Pancreas (tissue), 10 donors: ENCODE measurements at regions of chr15 and their contacts with region 1.

Region 1: GRCh38 chr15:69474848-69475455 is 22.3 kb downstream of the RPLP1 start:
- DNase-seq: no peak
- ATAC-seq: no peak
- H3K4me3 ChIP-seq: no peak overlapping the region
- H3K27ac ChIP-seq: no peak overlapping the region
- H3K4me1 ChIP-seq: no peaks in the 10 kb centered on the region
- H3K27me3 ChIP-seq: no peaks in the 10 kb centered on the region
- CTCF ChIP-seq: no peak

Region 2: GRCh38 chr15:68991723-68992122 is 483.2 kb before region 1 on chr15:
- intact Hi-C with region 1: no loop called
- DNase-seq: peak in 2 of 6 donors; percentile 14 to 49
- ATAC-seq: peak; percentile 34 to 82 (median 68)
- H3K4me3 ChIP-seq: no peak overlapping the region
- H3K27ac ChIP-seq: no peak overlapping the region
- H3K4me1 ChIP-seq: no peaks in the 10 kb centered on the region
- H3K27me3 ChIP-seq: no peaks in the 10 kb centered on the region
- CTCF ChIP-seq: no peak

Region 3: GRCh38 chr15:69951907-69952555 is 477.1 kb after region 1 on chr15:
- intact Hi-C with region 1: no loop called
- DNase-seq: no peak
- ATAC-seq: no peak
- H3K4me3 ChIP-seq: no peak overlapping the region
- H3K27ac ChIP-seq: no peak overlapping the region
- H3K4me1 ChIP-seq: no peaks in the 10 kb centered on the region
- H3K27me3 ChIP-seq: no peaks in the 10 kb centered on the region
- CTCF ChIP-seq: no peak

Region 4: DNA sequence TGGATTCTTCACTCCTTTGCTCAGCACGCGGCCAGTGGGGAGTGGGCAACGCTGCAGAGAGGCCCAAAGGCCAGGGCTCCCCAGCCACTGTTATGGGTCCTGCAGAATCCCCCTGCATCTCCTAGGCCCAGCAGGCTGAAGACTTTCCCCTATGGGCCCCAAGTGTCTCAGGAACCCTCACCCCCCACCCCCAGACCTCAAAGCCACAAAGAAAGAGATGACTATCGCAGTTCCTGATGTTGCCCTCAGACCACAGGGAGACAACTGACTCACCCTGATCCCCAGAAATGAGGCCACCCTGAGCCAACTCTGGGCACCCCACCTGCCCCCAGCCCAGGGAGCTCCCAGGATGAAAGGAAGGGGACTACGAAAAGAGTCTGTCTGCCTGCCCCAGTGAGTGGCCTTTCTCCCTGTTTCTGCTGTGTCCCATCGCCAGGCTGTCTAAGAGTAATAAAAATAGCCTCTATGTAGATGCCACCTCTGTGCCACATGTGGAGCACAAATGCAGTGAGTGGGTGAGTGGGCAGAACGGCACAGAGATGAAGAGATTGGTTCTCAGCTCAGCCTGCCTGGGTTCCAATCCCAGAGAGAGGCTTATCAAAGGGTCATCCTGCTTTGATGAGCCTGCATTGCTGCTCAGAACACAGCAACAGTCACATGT is 1005.4 kb after region 1 on chr15:
- intact Hi-C with region 1: loop called in 1 of 3 experiments (anchors 5 kb)
- DNase-seq: peak in 1 of 6 donors; percentile 21
- ATAC-seq: peak in 1 of 4 donors; percentile 40
- H3K4me3 ChIP-seq: no peak overlapping the region
- H3K27ac ChIP-seq: no peak overlapping the region
- H3K4me1 ChIP-seq: no peaks in the 10 kb centered on the region
- H3K27me3 ChIP-seq: no peaks in the 10 kb centered on the region
- CTCF ChIP-seq: no peak